ENCODE measurements at regions of chr17 and their contacts with region 1.

Region 1: GRCh38 chr17:75679706-75680442 is 12.7 kb downstream of the SAP30BP start:
- DNase-seq: no peak
- H3K4me3 ChIP-seq: no peak overlapping the region
- H3K27ac ChIP-seq: no peak overlapping the region
- H3K4me1 ChIP-seq: peaks cover 5% of the 10 kb centered on the region
- CTCF ChIP-seq: peak; percentile 38; the same call in 1 of the 2 replicates

Region 2: GRCh38 chr17:75632863-75633485 is 46.9 kb before region 1 on chr17 and contains the start of gene SMIM5:
- CTCF ChIA-PET with region 1: no interaction called
- POLR2A ChIA-PET with region 1: no interaction called
- intact Hi-C with region 1: loop called (anchors 1 kb)
- DNase-seq: peak; percentile 87
- H3K4me3 ChIP-seq: no peak within 1 kb of the TSS
- H3K27ac ChIP-seq: peak within 1 kb of the TSS; percentile 23
- H3K4me1 ChIP-seq: peaks cover 22% of the 10 kb centered on the region
- CTCF ChIP-seq: peak; percentile 99
- total RNA-seq, gene SMIM5: 0.06 TPM in 1 of 2 replicates, not detected in the other

Region 3: GRCh38 chr17:75712446-75712845 is 32.6 kb after region 1 on chr17:
- CTCF ChIA-PET with region 1: no interaction called
- POLR2A ChIA-PET with region 1: no interaction called
- intact Hi-C with region 1: loop called (anchors 5 kb)
- DNase-seq: no peak
- H3K4me3 ChIP-seq: no peak overlapping the region
- H3K27ac ChIP-seq: no peak overlapping the region
- H3K4me1 ChIP-seq: no peaks in the 10 kb centered on the region
- CTCF ChIP-seq: no peak

Measured in OCI-LY7 (cell line).